Panc1 (cell line): ENCODE measurements at regions of chr2 and their contacts with region 1.

Region 1: GRCh38 chr2:7905756-7906155 is 776.1 kb upstream of the ID2 start:
- DNase-seq: no peak
- ATAC-seq: no peak
- H3K4me3 ChIP-seq: no peak overlapping the region
- H3K27ac ChIP-seq: no peak overlapping the region
- H3K4me1 ChIP-seq: no peaks in the 10 kb centered on the region
- H3K27me3 ChIP-seq: no peaks in the 10 kb centered on the region
- CTCF ChIP-seq: no peak

Region 2: GRCh38 chr2:7891312-7891711 is 14.4 kb before region 1 on chr2:
- CTCF ChIA-PET with region 1: no interaction called
- POLR2A ChIA-PET with region 1: no interaction called
- in situ Hi-C with region 1: no loop called
- intact Hi-C with region 1: loop called (anchors 1 kb)
- DNase-seq: no peak
- ATAC-seq: no peak
- H3K4me3 ChIP-seq: no peak overlapping the region
- H3K27ac ChIP-seq: no peak overlapping the region
- H3K4me1 ChIP-seq: no peaks in the 10 kb centered on the region
- H3K27me3 ChIP-seq: no peaks in the 10 kb centered on the region
- CTCF ChIP-seq: no peak

Region 3: DNA sequence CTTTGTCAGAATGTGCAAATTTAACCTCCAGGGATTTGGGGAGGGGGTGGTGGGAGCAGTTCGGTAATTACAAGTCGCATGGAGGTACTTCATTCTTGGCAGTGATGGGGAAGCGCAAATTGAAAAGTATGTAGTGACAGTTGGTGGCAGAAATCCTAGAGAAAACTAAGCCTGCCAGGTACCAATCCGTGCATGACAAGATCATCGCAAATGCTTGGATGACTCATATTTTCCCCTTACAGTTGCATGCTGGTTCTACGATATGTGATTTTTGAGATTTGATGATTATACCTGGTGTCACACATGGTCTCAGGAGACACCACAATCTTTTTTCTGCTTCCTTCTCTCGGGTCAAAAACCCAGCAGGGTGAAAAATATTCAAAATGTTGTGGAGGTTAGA is 296.4 kb after region 1 on chr2:
- CTCF ChIA-PET with region 1: no interaction called
- POLR2A ChIA-PET with region 1: no interaction called
- in situ Hi-C with region 1: no loop called
- intact Hi-C with region 1: no loop called
- DNase-seq: no peak
- ATAC-seq: no peak
- H3K4me3 ChIP-seq: no peak overlapping the region
- H3K27ac ChIP-seq: no peak overlapping the region
- H3K4me1 ChIP-seq: no peaks in the 10 kb centered on the region
- H3K27me3 ChIP-seq: 0 out of 2 replicates have a peak, but pooled peaks cover 4% of the 10 kb centered on the region
- CTCF ChIP-seq: no peak